ENCODE measurements at regions of chr9 and their contacts with region 1.

Region 1: GRCh38 chr9:116149844-116150243 is 3.7 kb upstream of the PAPPA start:
- DNase-seq: no peak
- ATAC-seq: peak; percentile 21

Region 2: DNA sequence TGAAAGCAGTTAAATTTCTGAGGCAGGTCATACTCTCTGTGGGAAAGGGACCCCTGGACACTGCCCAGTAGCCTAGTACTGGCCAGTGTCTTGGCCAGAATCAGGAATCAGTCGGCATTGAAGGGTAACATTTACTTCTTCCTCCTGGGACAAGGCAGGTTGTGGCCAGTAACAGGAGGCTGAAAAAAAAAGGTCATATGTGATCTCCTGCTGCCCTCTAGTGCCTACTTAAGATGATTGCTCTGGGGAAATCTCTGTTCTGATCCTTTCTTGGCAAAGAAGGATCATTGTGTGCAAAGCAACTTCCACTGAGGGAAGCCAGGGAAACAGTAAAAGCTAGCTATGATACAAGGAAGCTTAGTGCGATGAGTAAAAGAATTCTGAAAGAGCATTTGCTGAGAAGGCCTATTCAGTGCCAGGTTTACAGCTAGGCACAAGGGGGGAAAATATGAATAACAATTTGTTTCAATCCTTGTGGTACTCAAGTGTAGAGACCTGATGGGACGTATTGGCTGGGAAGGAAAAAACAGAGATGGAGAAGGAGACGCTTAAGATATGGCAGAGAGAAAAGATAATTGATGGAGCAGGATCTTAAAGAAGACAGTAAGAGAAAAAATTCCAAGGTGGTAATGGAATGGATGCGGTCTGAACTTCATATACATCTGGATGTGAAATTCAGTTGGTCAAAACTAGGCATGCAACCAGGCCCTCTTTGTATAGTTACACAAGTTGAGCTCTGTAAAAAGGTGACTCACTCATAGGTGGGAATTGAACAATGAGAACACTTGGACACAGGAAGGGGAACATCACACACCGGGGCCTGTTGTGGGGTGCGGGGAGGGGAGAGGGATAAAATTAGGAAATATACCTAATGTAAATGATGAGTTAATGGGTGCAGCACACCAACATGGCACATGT is 511.5 kb after region 1 on chr9:
- intact Hi-C with region 1: loop called (anchors 5 kb)
- DNase-seq: no peak
- ATAC-seq: peak; percentile 83